PC-9 (cell line): ENCODE measurements at regions of chr1 and their contacts with region 1.

Region 1: GRCh38 chr1:58528518-58528917 is 18.0 kb downstream of the OMA1 start:
- DNase-seq: peak in 1 of 2 experiments; percentile 36
- H3K4me3 ChIP-seq: no peak overlapping the region
- H3K27ac ChIP-seq: no peak overlapping the region
- H3K4me1 ChIP-seq: no peaks in the 10 kb centered on the region
- H3K27me3 ChIP-seq: no peaks in the 10 kb centered on the region
- CTCF ChIP-seq: no peak

Region 2: GRCh38 chr1:58395355-58395754 is 133.2 kb before region 1 on chr1:
- CTCF ChIA-PET with region 1: no interaction called
- POLR2A ChIA-PET with region 1: interaction called, 44 read pairs
- intact Hi-C with region 1: no loop called
- DNase-seq: peak; percentile 25 to 36
- H3K4me3 ChIP-seq: no peak overlapping the region
- H3K27ac ChIP-seq: no peak overlapping the region
- H3K4me1 ChIP-seq: no peaks in the 10 kb centered on the region
- H3K27me3 ChIP-seq: no peaks in the 10 kb centered on the region
- CTCF ChIP-seq: no peak

Region 3: GRCh38 chr1:58508629-58509028 is 19.9 kb before region 1 on chr1:
- CTCF ChIA-PET with region 1: no interaction called
- POLR2A ChIA-PET with region 1: interaction called, 18 read pairs
- intact Hi-C with region 1: no loop called
- DNase-seq: no peak
- H3K4me3 ChIP-seq: no peak overlapping the region
- H3K27ac ChIP-seq: no peak overlapping the region
- H3K4me1 ChIP-seq: no peaks in the 10 kb centered on the region
- H3K27me3 ChIP-seq: no peaks in the 10 kb centered on the region
- CTCF ChIP-seq: no peak